ENCODE measurements at regions of chr12 and their contacts with region 1.

Region 1: GRCh38 chr12:103930034-103930786 is at the start of gene HSP90B1:
- DNase-seq: peak; percentile 99 to 100 (median 99)
- ATAC-seq: peak; percentile 74
- H3K4me3 ChIP-seq: peak within 1 kb of the TSS; percentile 67 to 91
- H3K4me3 Mint-ChIP-seq: peak within 1 kb of the TSS; percentile 83
- H3K27ac ChIP-seq: peak within 1 kb of the TSS; percentile 96 to 98
- H3K27ac Mint-ChIP-seq: peak within 1 kb of the TSS; percentile 97
- H3K4me1 ChIP-seq: peaks cover 43% of the 10 kb centered on the region
- H3K4me1 Mint-ChIP-seq: peaks cover 64% of the 10 kb centered on the region
- H3K27me3 ChIP-seq: no peaks in the 10 kb centered on the region
- H3K27me3 Mint-ChIP-seq: no peaks in the 10 kb centered on the region
- CTCF ChIP-seq: no peak
- total RNA-seq, gene HSP90B1: 173 to 179 TPM

Region 2: GRCh38 chr12:103840876-103841689 is 89.1 kb before region 1 on chr12 and contains the start of gene NT5DC3:
- CTCF ChIA-PET with region 1: no interaction called
- POLR2A ChIA-PET with region 1: interaction called, 10 read pairs
- intact Hi-C with region 1: loop called (anchors 1 to 2 kb)
- DNase-seq: peak; percentile 66 to 91 (median 82)
- ATAC-seq: peak; percentile 93
- H3K4me3 ChIP-seq: peak within 1 kb of the TSS; percentile 64 to 68
- H3K4me3 Mint-ChIP-seq: peak within 1 kb of the TSS; percentile 85
- H3K27ac ChIP-seq: peak within 1 kb of the TSS; percentile 36 to 40
- H3K27ac Mint-ChIP-seq: peak within 1 kb of the TSS; percentile 74
- H3K4me1 ChIP-seq: peaks cover 11% of the 10 kb centered on the region
- H3K4me1 Mint-ChIP-seq: peaks cover 18% of the 10 kb centered on the region
- H3K27me3 ChIP-seq: no peaks in the 10 kb centered on the region
- H3K27me3 Mint-ChIP-seq: no peaks in the 10 kb centered on the region
- CTCF ChIP-seq: no peak
- total RNA-seq, gene NT5DC3: 4.3 to 5.6 TPM

Region 3: DNA sequence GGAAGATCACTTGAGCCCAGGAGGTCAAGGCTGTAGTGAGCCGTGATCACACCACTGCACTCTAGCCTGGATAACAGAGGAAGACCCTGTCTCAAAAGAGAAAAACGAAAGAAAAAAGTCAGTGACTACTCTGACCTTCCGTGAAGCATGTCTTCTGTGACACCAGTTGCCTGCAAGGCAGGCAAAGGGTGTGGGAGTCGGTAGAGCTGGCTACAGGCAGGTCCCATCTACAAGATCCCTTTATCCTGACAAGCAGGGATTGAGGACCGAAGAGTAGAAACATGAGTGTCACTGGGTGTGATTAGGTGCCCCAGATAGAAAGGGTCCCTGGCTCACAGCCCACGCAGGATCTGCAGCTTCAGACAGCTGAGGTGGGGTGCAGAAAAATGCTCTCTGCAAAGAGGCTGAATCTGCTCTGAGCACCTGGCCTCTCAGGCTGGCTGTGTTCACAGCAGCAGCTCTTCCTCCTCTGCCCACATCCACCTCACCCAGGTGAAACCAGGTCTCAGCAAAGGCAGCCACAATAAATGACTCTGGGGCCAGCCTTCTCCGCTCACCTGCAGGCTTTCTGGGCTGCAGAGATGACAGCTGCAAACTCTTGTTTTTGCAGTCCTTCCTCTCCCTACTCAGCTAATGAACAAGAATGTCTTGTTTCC is 28.6 kb before region 1 on chr12:
- CTCF ChIA-PET with region 1: interaction called, 4 read pairs
- POLR2A ChIA-PET with region 1: interaction called, 122 read pairs
- intact Hi-C with region 1: loop called (anchors 1 to 2 kb)
- DNase-seq: peak; percentile 22 to 81 (median 59)
- ATAC-seq: peak; percentile 96
- H3K4me3 ChIP-seq: peak overlapping the region; percentile 6 to 53
- H3K4me3 Mint-ChIP-seq: peak overlapping the region; percentile 76
- H3K27ac ChIP-seq: peak overlapping the region; percentile 28 to 54
- H3K27ac Mint-ChIP-seq: peak overlapping the region; percentile 94
- H3K4me1 ChIP-seq: peaks cover 56% of the 10 kb centered on the region
- H3K4me1 Mint-ChIP-seq: peaks cover 69% of the 10 kb centered on the region
- H3K27me3 ChIP-seq: no peaks in the 10 kb centered on the region
- H3K27me3 Mint-ChIP-seq: no peaks in the 10 kb centered on the region
- CTCF ChIP-seq: no peak

Region 4: GRCh38 chr12:103947871-103948555 is 17.8 kb after region 1 on chr12:
- CTCF ChIA-PET with region 1: no interaction called
- POLR2A ChIA-PET with region 1: interaction called, 9 read pairs
- intact Hi-C with region 1: loop called in 1 of 2 experiments (anchors 2 kb)
- DNase-seq: no peak
- ATAC-seq: no peak
- H3K4me3 ChIP-seq: no peak overlapping the region
- H3K4me3 Mint-ChIP-seq: no peak overlapping the region
- H3K27ac ChIP-seq: no peak overlapping the region
- H3K27ac Mint-ChIP-seq: peak overlapping the region; percentile 32
- H3K4me1 ChIP-seq: no peaks in the 10 kb centered on the region
- H3K4me1 Mint-ChIP-seq: peaks cover 6% of the 10 kb centered on the region
- H3K27me3 ChIP-seq: no peaks in the 10 kb centered on the region
- H3K27me3 Mint-ChIP-seq: no peaks in the 10 kb centered on the region
- CTCF ChIP-seq: no peak

Region 5: GRCh38 chr12:104064031-104064822 is 134.0 kb after region 1 on chr12 and contains the start of gene HCFC2:
- CTCF ChIA-PET with region 1: no interaction called
- POLR2A ChIA-PET with region 1: interaction called, 3 read pairs
- intact Hi-C with region 1: loop called (anchors 1 to 2 kb)
- DNase-seq: peak; percentile 71 to 92 (median 87)
- ATAC-seq: peak; percentile 92
- H3K4me3 ChIP-seq: peak within 1 kb of the TSS; percentile 75 to 98
- H3K4me3 Mint-ChIP-seq: peak within 1 kb of the TSS; percentile 95
- H3K27ac ChIP-seq: peak within 1 kb of the TSS; percentile 61 to 64
- H3K27ac Mint-ChIP-seq: peak within 1 kb of the TSS; percentile 93
- H3K4me1 ChIP-seq: peaks cover 7% of the 10 kb centered on the region
- H3K4me1 Mint-ChIP-seq: peaks cover 29% of the 10 kb centered on the region
- H3K27me3 ChIP-seq: peaks cover 0 to 3% of the 10 kb centered on the region in 2 experiments
- H3K27me3 Mint-ChIP-seq: peaks cover 4% of the 10 kb centered on the region
- CTCF ChIP-seq: no peak
- total RNA-seq, gene HCFC2: 13.9 to 16.7 TPM

Measured in CD8-positive, alpha-beta T cell (primary cell).